ENCODE measurements at regions of chr11 and their contacts with region 1.

Region 1: DNA sequence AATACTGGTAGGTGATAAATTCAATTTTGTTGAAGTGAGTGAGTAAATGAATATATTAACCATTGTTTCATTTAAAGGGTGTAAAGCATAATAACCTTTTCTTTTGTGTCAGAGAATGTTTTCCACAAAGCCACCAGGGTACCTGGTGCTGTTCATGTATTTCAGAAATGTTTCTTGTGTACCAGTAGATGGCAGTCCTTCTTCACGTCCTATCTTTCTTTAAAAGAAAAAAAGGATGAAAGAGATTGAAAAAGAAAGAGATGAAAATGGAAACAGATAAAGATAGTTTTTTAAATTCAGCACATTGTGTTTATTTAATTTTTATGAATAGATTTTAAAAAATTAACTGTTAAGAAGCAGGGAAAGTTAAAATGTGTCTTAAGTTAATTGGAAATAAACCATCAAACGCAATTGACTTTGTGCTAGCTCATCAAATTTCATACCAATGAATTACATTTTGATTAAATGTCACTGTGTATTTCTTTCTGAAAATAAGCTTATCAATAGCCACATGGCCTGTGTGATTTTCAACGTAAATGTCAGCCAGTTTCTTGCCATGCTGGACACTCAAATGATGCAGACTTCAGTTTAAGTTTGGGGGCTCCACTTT is 65.5 kb upstream of the CHORDC1 start:
- DNase-seq: peak; percentile 3
- H3K4me3 ChIP-seq: no peak overlapping the region
- H3K27ac ChIP-seq: no peak overlapping the region
- H3K4me1 ChIP-seq: no peaks in the 10 kb centered on the region
- H3K27me3 ChIP-seq: no peaks in the 10 kb centered on the region
- CTCF ChIP-seq: peak; percentile 54 to 71

Region 2: DNA sequence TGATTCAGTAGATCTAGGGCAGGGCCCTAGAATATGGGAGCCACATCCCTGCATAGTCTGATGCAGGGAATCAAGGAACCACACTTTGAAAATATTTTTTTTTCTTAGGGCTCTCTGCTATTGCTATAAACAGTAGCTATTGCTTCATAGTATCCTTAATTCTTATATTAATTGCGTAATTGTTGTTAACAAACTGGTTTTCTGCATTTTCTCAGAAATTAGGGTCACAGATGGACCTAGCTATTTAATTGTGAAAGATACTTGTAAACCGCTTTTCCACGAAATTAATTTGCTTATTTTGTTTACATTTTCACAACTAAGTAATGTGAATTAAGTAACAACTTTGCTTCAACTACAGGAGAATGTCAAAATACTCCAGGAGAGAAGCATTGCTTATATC is 119.7 kb before region 1 on chr11:
- CTCF ChIA-PET with region 1: no interaction called
- dilution Hi-C with region 1: no loop called
- in situ Hi-C with region 1: no loop called
- intact Hi-C with region 1: no loop called
- DNase-seq: no peak
- H3K4me3 ChIP-seq: no peak overlapping the region
- H3K27ac ChIP-seq: no peak overlapping the region
- H3K4me1 ChIP-seq: no peaks in the 10 kb centered on the region
- H3K27me3 ChIP-seq: no peaks in the 10 kb centered on the region
- CTCF ChIP-seq: no peak

Region 3: DNA sequence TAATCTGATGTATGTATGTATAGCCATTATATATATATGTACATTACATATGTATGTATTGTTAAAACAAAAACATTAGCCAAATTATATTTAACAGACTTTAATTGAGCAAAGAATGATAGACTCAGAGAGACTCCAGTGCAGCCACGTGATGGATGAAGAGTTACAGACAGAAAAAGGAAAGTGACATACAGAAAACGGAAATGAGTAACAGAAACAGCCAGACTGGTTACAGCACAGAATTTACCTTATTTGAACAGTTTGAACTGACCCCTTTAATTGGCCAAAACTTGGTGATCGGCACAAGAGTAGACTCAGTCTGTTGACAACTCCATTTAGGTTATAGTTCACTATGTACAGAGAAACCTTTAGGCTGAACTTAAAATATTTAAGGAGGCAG is 100.5 kb before region 1 on chr11:
- CTCF ChIA-PET with region 1: no interaction called
- dilution Hi-C with region 1: no loop called
- in situ Hi-C with region 1: no loop called
- intact Hi-C with region 1: no loop called
- DNase-seq: no peak
- H3K4me3 ChIP-seq: no peak overlapping the region
- H3K27ac ChIP-seq: no peak overlapping the region
- H3K4me1 ChIP-seq: no peaks in the 10 kb centered on the region
- H3K27me3 ChIP-seq: no peaks in the 10 kb centered on the region
- CTCF ChIP-seq: no peak

Region 4: GRCh38 chr11:90434858-90435257 is 146.5 kb after region 1 on chr11:
- CTCF ChIA-PET with region 1: no interaction called
- dilution Hi-C with region 1: no loop called
- in situ Hi-C with region 1: no loop called
- intact Hi-C with region 1: loop called (anchors 1 kb)
- DNase-seq: peak; percentile 16
- H3K4me3 ChIP-seq: no peak overlapping the region
- H3K27ac ChIP-seq: no peak overlapping the region
- H3K4me1 ChIP-seq: no peaks in the 10 kb centered on the region
- H3K27me3 ChIP-seq: peaks cover 4% of the 10 kb centered on the region
- CTCF ChIP-seq: peak; percentile 34 to 49

Region 5: DNA sequence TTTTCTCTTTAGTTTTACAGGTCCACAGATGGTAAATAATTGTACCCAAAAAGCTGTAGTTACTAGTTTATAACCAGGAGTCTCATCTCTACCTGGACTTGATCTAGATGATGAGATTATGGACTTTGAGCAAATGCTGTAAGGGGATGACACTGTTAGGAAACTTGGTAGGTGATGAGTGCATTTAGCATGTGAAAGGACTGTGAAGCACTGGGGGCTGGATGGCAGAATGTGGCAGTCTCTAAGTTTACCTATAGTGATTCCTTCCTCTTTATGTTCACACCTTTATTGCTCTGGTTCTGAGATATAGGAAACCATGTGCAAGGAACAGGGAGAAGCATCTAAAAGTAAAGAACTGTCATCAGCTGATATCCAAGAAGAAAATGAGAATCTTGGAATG is 165.2 kb after region 1 on chr11:
- CTCF ChIA-PET with region 1: no interaction called
- dilution Hi-C with region 1: no loop called
- in situ Hi-C with region 1: no loop called
- intact Hi-C with region 1: loop called (anchors 2 kb)
- DNase-seq: no peak
- H3K4me3 ChIP-seq: no peak overlapping the region
- H3K27ac ChIP-seq: no peak overlapping the region
- H3K4me1 ChIP-seq: peaks cover 13% of the 10 kb centered on the region
- H3K27me3 ChIP-seq: no peaks in the 10 kb centered on the region
- CTCF ChIP-seq: no peak

Region 6: GRCh38 chr11:90542092-90542491 is 253.8 kb after region 1 on chr11:
- CTCF ChIA-PET with region 1: no interaction called
- dilution Hi-C with region 1: no loop called
- in situ Hi-C with region 1: no loop called
- intact Hi-C with region 1: loop called (anchors 2 kb)
- DNase-seq: no peak
- H3K4me3 ChIP-seq: no peak overlapping the region
- H3K27ac ChIP-seq: no peak overlapping the region
- H3K4me1 ChIP-seq: no peaks in the 10 kb centered on the region
- H3K27me3 ChIP-seq: no peaks in the 10 kb centered on the region
- CTCF ChIP-seq: no peak